Activated CD4-positive, alpha-beta memory T cell treated with anti-CD3 and anti-CD28 coated beads for 36 hours (primary cell): ENCODE measurements at regions of chr6 and their contacts with region 1.

Region 1: GRCh38 chr6:26122793-26123674 is 35.8 kb downstream of the HFE start:
- DNase-seq: peak; percentile 95
- H3K4me3 Mint-ChIP-seq: peak overlapping the region; percentile 95
- H3K27ac Mint-ChIP-seq: peak overlapping the region; percentile 100
- H3K4me1 Mint-ChIP-seq: peaks cover 34% of the 10 kb centered on the region
- H3K27me3 Mint-ChIP-seq: peaks cover 8% of the 10 kb centered on the region

Region 2: GRCh38 chr6:26031595-26032339 is 91.3 kb before region 1 on chr6:
- CTCF ChIA-PET with region 1: interaction called, 3 read pairs
- POLR2A ChIA-PET with region 1: interaction called, 72 read pairs
- intact Hi-C with region 1: no loop called
- DNase-seq: peak; percentile 93
- H3K4me3 Mint-ChIP-seq: peak overlapping the region; percentile 83
- H3K27ac Mint-ChIP-seq: peak overlapping the region; percentile 99
- H3K4me1 Mint-ChIP-seq: peaks cover 49% of the 10 kb centered on the region
- H3K27me3 Mint-ChIP-seq: peaks cover 17% of the 10 kb centered on the region

Region 3: DNA sequence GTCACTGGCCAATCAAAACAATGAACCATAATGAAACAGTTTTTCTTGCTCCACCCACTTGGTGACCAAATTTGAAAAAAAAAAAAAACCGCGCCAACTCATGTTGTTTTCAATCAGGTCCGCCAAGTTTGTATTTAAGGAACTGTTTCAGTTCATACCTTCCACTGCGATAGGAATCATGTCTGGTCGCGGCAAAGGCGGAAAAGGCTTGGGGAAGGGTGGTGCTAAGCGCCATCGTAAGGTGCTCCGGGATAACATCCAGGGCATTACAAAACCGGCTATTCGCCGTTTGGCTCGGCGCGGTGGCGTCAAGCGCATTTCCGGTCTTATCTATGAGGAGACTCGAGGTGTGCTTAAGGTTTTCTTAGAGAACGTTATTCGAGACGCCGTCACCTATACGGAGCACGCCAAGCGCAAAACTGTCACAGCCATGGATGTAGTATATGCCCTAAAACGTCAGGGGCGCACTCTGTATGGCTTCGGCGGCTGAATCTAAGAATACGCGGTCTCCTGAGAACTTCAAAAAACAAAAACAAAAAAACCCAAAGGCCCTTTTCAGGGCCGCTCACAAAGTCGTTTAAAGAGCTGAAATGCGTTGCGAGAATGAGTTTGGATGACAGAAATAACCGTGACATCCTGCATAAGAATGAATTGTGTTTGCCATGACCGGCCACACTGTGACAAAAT is 19.1 kb before region 1 on chr6:
- CTCF ChIA-PET with region 1: interaction called, 3 read pairs
- POLR2A ChIA-PET with region 1: interaction called, 95 read pairs
- intact Hi-C with region 1: loop called (anchors 1 kb)
- DNase-seq: peak; percentile 93
- H3K4me3 Mint-ChIP-seq: peak overlapping the region; percentile 80
- H3K27ac Mint-ChIP-seq: peak overlapping the region; percentile 93
- H3K4me1 Mint-ChIP-seq: peaks cover 18% of the 10 kb centered on the region
- H3K27me3 Mint-ChIP-seq: peaks cover 3% of the 10 kb centered on the region

Region 4: DNA sequence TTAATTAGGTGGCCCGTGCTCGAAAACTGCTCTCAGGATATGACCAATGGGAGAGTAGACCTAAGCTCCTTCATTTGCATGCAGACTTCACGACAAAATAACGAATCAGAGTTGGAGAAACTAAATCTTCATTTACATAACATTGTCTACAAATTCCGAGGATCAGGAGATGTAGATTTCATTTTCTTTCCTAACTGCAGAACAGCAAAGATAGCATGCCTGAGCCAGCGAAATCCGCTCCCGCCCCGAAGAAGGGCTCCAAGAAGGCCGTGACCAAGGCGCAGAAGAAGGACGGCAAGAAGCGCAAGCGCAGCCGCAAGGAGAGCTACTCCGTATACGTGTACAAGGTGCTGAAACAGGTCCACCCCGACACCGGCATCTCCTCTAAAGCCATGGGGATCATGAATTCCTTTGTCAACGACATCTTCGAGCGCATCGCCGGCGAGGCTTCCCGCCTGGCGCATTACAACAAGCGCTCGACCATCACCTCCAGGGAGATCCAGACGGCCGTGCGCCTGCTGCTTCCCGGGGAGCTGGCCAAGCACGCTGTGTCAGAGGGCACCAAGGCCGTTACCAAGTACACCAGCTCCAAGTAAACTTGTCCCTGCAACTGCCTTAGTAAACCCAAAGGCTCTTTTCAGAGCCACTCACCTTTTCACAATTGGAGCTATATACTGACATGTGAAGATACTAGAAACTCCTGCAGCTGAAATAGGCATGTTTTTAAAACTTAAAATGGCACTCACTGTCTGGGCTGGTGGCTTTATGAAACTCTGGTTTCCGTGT is 60.7 kb after region 1 on chr6:
- CTCF ChIA-PET with region 1: no interaction called
- POLR2A ChIA-PET with region 1: interaction called, 43 read pairs
- intact Hi-C with region 1: no loop called
- DNase-seq: peak; percentile 80
- H3K4me3 Mint-ChIP-seq: peak overlapping the region; percentile 85
- H3K27ac Mint-ChIP-seq: peak overlapping the region; percentile 95
- H3K4me1 Mint-ChIP-seq: peaks cover 37% of the 10 kb centered on the region
- H3K27me3 Mint-ChIP-seq: peaks cover under 1% of the 10 kb centered on the region

Region 5: DNA sequence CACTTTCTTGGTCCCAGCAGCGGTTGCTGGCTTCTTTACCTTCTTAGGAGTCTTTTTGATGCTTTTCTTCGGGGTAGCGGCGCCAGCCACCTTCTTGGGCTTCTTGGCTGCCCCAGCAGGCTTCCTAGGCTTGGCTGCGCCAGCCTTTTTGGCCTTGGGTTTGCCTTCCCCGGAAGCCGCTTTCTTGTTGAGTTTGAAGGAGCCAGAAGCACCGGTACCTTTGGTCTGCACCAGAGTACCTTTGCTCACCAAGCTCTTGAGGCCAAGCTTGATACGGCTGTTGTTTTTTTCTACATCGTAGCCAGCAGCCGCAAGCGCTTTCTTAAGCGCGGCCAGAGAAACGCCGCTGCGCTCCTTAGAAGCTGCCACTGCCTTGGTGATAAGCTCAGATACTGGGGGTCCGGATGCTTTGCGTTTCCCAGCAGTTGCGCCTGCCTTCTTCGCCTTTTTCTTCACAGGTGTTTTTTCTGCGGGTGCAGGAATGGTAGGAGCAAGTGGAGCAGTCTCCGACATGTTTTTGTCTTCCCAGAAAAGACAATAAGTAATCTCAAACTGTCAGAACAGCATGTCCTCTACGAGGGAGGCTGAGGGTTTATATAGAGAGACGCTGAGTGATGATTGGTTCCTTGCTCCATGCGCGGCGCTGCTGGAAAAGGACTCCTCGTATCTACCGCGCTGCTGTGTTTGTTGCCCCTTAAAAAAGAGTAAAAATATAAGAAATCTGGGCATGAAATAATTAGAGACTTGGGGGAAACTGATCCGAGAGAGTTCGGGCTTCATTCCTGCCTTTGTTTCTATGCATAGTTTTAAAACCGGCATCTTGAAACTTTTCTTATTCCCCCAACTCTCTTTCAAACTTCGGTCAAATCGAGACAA is 111.6 kb after region 1 on chr6:
- CTCF ChIA-PET with region 1: no interaction called
- POLR2A ChIA-PET with region 1: interaction called, 53 read pairs
- intact Hi-C with region 1: no loop called
- DNase-seq: peak; percentile 85
- H3K4me3 Mint-ChIP-seq: peak overlapping the region; percentile 82
- H3K27ac Mint-ChIP-seq: peak overlapping the region; percentile 99
- H3K4me1 Mint-ChIP-seq: peaks cover 29% of the 10 kb centered on the region
- H3K27me3 Mint-ChIP-seq: peaks cover 12% of the 10 kb centered on the region

Region 6: DNA sequence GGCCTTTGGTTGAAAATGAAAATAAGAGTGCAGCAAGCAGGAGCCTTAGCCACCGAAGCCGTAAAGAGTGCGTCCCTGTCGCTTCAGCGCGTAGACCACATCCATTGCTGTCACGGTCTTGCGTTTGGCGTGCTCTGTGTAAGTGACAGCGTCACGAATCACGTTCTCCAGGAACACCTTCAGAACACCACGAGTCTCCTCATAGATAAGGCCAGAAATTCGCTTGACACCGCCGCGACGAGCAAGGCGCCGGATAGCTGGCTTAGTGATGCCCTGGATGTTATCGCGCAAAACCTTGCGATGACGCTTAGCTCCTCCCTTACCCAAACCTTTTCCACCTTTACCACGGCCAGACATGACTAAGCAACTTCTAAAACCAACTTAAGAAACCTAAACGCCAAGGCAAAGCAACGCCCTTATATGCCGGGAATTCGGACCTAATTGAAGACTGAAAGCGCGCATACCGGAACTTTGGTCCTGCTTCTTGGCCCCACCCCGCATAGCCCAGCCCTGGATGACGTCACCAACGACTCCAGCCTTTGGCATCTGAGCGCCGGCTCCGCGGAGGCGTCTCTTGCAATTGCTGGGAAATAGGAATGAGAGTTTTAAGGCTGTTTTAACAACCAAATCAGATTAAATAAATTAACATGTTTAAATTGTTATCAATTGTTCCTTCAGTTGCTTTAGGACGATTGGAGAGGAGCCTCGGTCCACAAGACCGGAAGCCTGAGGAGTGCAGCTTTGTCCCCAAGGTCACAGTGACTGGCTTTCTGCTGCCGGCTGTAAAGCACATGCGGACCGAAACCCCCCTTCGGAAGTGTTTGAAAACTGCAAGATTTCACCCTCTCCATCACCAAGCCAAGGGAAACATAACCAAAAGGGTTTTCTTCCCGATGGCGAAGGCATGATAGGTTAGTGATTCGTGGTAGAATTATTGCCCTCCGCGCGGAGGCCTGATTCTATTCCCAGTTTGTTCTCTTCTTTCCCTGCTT is 162.4 kb after region 1 on chr6:
- CTCF ChIA-PET with region 1: no interaction called
- POLR2A ChIA-PET with region 1: interaction called, 21 read pairs
- intact Hi-C with region 1: loop called (anchors 1 kb)
- DNase-seq: peak; percentile 98
- H3K4me3 Mint-ChIP-seq: peak overlapping the region; percentile 92
- H3K27ac Mint-ChIP-seq: peak overlapping the region; percentile 96
- H3K4me1 Mint-ChIP-seq: peaks cover 16% of the 10 kb centered on the region
- H3K27me3 Mint-ChIP-seq: peaks cover 5% of the 10 kb centered on the region

Region 7: DNA sequence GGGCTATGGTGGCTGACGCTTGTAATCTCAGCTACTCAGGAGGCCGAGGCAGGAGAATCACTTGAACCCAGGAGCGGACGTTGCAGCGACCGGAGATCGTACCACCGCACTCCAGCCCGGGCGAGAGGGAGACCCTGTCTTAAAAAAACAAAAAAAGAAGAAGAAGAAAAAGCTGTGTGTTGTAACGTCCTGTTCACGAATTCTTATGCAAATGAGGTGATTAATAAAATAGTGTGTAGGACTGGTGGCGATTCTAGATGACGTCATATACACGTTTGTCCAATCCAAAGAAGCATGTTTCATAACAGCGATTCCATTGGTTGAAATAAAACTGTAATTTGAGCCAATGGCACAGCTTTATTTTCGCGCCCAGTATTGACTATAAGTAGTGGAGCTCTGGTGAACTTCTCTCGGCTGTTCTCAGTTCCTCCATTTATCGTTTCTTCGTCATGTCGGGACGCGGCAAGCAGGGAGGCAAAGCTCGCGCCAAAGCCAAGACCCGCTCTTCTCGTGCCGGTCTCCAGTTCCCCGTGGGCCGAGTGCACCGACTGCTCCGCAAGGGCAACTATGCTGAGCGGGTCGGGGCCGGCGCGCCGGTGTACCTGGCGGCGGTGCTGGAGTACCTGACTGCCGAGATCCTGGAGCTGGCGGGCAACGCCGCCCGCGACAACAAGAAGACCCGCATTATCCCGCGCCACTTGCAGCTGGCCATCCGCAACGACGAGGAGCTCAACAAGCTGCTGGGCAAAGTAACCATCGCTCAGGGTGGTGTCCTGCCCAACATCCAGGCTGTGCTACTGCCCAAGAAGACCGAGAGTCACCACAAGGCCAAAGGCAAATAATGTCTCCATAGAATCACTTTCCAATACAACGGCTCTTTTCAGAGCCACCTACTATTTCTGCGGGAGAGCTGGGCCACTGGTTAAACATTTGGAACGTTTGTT is 1742.1 kb after region 1 on chr6:
- CTCF ChIA-PET with region 1: no interaction called
- POLR2A ChIA-PET with region 1: interaction called, 13 read pairs
- intact Hi-C with region 1: no loop called
- DNase-seq: peak; percentile 85
- H3K4me3 Mint-ChIP-seq: peak overlapping the region; percentile 96
- H3K27ac Mint-ChIP-seq: peak overlapping the region; percentile 100
- H3K4me1 Mint-ChIP-seq: peaks cover 38% of the 10 kb centered on the region
- H3K27me3 Mint-ChIP-seq: peaks cover 20% of the 10 kb centered on the region